Gastrocnemius medialis (tissue), 4 donors: ENCODE measurements at regions of chr5 and their contacts with region 1.

Region 1: GRCh38 chr5:59188419-59189225 is 605.7 kb downstream of the RAB3C start:
- DNase-seq: peak; percentile 55 to 69
- ATAC-seq: peak; percentile 40 to 53
- H3K4me3 ChIP-seq: peak overlapping the region; percentile 40 to 46 (median 40)
- H3K27ac ChIP-seq: peak overlapping the region; percentile 53 to 70 (median 60)
- H3K4me1 ChIP-seq: peaks cover 41 to 64% of the 10 kb centered on the region in 2 donors
- H3K27me3 ChIP-seq: no peaks in the 10 kb centered on the region
- CTCF ChIP-seq: peak; percentile 81 to 87 (median 83)
- POLR2A ChIP-seq: no peak

Region 2: GRCh38 chr5:59380350-59380951 is 191.8 kb after region 1 on chr5:
- in situ Hi-C with region 1: loop called (anchors 5 to 10 kb)
- intact Hi-C with region 1: loop called (anchors 2 kb)
- DNase-seq: no peak
- ATAC-seq: peak; percentile 67 to 74
- H3K4me3 ChIP-seq: no peak overlapping the region
- H3K27ac ChIP-seq: peak overlapping the region in 1 of 4 donors; percentile 45
- H3K4me1 ChIP-seq: no peaks in the 10 kb centered on the region
- H3K27me3 ChIP-seq: no peaks in the 10 kb centered on the region
- CTCF ChIP-seq: peak; percentile 38 to 58 (median 49)
- POLR2A ChIP-seq: no peak

Region 3: GRCh38 chr5:59673438-59674058 is 484.9 kb after region 1 on chr5:
- in situ Hi-C with region 1: loop called (anchors 5 to 25 kb)
- intact Hi-C with region 1: loop called (anchors 5 kb)
- DNase-seq: no peak
- ATAC-seq: peak; percentile 43 to 60
- H3K4me3 ChIP-seq: no peak overlapping the region
- H3K27ac ChIP-seq: no peak overlapping the region
- H3K4me1 ChIP-seq: peaks cover 6% of the 10 kb centered on the region in 2 donors
- H3K27me3 ChIP-seq: no peaks in the 10 kb centered on the region
- CTCF ChIP-seq: peak; percentile 73 to 82 (median 77)
- POLR2A ChIP-seq: no peak